ENCODE measurements at regions of chr17 and their contacts with region 1.

Region 1: DNA sequence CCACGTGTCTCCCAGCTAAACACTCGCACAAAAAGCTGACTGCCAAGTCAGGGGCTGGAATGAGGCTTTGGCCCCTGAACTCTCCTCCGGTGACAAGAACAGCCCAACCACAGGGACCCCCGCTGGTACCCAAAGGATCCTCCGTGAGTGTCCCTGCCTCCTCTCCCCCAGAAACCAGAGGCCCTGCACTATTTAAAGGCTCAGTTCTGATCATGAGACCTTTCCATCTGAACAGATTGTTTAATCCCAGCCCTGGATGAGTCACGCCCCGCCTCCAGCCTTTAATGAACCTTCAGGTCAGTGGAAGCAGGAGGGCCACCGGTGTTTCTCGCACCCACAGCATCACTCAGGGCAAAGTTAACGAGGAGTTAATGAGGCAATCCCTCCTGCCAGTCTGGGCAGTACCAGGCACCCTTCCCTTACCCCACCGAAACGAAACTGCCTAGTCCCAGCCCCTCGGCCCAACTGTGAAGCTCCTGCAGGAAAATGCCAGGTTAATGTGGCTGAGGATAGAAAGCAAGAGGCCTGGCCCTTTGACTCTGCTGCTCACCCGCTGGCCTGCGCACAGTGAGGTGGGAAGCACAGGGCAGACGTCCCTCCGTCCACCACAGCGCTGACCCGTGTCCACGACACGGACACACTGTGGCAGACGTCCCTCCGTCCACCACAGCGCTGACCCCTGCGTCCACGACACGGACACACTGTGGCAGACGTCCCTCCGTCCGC is 32.4 kb downstream of the TIMM22 start:
- DNase-seq: no peak
- H3K4me3 ChIP-seq: no peak overlapping the region
- CTCF ChIP-seq: no peak

Region 2: GRCh38 chr17:1073241-1073962 is 44.0 kb after region 1 on chr17:
- in situ Hi-C with region 1: no loop called
- DNase-seq: no peak
- H3K4me3 ChIP-seq: no peak overlapping the region
- CTCF ChIP-seq: no peak

Region 3: DNA sequence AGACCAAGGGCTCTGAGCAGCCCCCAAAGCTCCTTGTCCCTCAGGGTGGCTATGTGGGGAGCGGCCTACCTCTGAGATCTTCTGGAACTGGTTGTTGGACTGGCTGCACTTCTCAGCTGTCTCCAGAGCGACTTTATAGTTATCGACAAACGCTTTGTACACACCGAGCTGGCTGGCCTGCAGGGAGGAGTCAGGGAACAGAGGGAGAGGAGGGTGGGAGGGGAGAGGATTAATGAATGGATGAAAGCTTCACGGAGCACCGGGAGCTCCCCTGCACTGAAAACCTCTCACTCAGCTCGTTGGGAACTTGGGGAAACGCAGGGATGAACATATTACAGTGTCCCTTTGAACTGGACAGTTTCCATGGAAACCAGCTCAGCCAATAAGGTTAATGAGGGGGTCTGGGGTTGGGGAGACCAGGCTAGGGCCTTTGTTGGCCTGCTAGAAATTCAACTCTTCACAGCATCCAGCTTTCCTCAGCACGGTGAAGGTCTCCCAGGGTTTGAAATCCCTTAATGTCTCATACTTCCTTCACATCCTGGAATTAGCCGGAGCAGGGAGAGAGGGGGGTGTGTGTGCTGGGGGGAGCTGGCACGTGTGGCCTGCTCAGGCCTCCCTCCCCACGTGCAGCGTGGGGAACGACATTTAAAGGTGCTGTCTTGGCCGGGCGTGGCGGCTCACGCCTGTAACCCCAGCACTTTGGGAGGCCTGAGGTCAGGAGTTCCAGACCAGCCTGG is 54.3 kb after region 1 on chr17:
- in situ Hi-C with region 1: loop called (anchors 5 kb)
- DNase-seq: no peak
- H3K4me3 ChIP-seq: no peak overlapping the region
- CTCF ChIP-seq: no peak

Region 4: DNA sequence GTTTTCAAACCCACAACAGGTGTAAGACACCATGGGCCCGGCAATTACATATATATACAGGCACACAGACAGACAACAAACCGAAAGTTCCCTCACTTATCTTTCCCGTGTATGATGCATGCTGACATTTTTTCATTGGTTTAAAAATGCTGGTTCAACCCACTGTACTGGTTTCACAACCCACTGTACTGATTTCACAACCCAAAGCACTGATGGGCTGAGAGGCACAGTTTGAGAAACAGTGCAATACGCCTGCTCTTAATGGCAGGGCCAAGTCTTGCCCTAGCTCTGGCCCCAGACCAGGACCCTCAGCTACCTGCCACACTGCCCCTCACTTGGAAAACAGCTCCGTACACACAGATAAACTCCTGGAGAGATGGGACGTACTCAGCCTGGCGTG is 69.0 kb after region 1 on chr17:
- in situ Hi-C with region 1: no loop called
- DNase-seq: no peak
- H3K4me3 ChIP-seq: no peak overlapping the region
- CTCF ChIP-seq: no peak

Region 5: GRCh38 chr17:1123921-1124715 is 94.8 kb after region 1 on chr17:
- in situ Hi-C with region 1: no loop called
- DNase-seq: no peak
- H3K4me3 ChIP-seq: no peak overlapping the region
- CTCF ChIP-seq: no peak

Measured in astrocyte of the cerebellum (primary cell).